ENCODE measurements at regions of chr2 and their contacts with region 1.

Region 1: DNA sequence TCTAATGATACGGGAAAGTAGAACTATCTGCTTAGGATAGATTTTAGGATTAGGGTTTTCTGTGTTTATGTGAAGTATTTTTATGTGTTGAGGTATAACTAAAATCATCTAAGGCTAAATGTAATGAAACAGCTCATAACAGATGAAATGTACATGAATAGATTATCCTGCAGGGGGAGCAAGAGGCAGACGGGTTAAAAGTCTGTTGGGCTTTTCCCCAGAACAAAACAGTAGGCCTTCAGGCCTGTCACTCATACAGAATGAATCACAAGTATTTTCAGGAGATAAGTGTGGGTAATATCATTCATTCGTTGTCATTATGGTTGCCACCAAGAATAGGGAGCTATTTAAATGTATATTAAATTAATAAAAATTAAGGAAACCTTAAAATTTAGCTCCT is 107.9 kb upstream of the IL1R2 start:
- DNase-seq: no peak

Region 2: GRCh38 chr2:101815739-101816391 is 68.0 kb before region 1 on chr2:
- intact Hi-C with region 1: no loop called
- DNase-seq: no peak

Region 3: DNA sequence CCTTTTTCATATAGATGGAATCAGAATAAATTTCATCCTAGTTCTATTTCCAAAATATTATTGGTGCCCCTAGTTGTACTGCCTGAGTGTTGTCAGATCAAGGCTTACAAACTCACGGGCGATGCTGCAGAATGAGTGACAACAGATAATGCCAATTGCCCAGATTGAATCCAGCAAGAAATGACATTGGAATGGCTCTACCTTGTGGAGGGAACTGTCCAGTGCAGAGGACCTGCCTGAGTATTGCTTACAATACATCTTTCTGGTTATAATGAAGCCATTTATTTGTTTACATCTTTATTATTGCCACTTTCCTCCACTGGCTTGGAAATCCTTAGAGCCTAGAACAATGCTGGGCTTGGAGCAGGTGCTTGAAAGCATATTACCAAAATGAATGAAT is 100.1 kb after region 1 on chr2:
- intact Hi-C with region 1: loop called (anchors 10 kb)
- DNase-seq: no peak